WTC11 (cell line): ENCODE measurements at regions of chr2 and their contacts with region 1.

Region 1: GRCh38 chr2:219029829-219030165 is 11.5 kb downstream of the CFAP65 start:
- DNase-seq: peak; percentile 89
- ATAC-seq: peak; percentile 96
- H3K4me3 Mint-ChIP-seq: no peak overlapping the region
- H3K27ac Mint-ChIP-seq: 0 out of 2 replicates have a peak overlapping the region, but pooled peaks have one; percentile 26
- H3K4me1 Mint-ChIP-seq: peaks cover 3% of the 10 kb centered on the region
- H3K27me3 Mint-ChIP-seq: no peaks in the 10 kb centered on the region; the same call in 1 of the 2 replicates
- CTCF ChIP-seq: peak; percentile 94

Region 2: GRCh38 chr2:218618102-218618860 is 411.5 kb before region 1 on chr2:
- CTCF ChIA-PET with region 1: no interaction called
- POLR2A ChIA-PET with region 1: no interaction called
- DNase-seq: peak; percentile 22
- ATAC-seq: peak; percentile 60
- H3K4me3 Mint-ChIP-seq: no peak overlapping the region
- H3K27ac Mint-ChIP-seq: no peak overlapping the region
- H3K4me1 Mint-ChIP-seq: peaks cover 3% of the 10 kb centered on the region
- H3K27me3 Mint-ChIP-seq: no peaks in the 10 kb centered on the region
- CTCF ChIP-seq: no peak

Region 3: GRCh38 chr2:218833023-218833609 is 196.7 kb before region 1 on chr2:
- CTCF ChIA-PET with region 1: no interaction called
- POLR2A ChIA-PET with region 1: no interaction called
- DNase-seq: no peak
- ATAC-seq: no peak
- H3K4me3 Mint-ChIP-seq: no peak overlapping the region
- H3K27ac Mint-ChIP-seq: no peak overlapping the region
- H3K4me1 Mint-ChIP-seq: no peaks in the 10 kb centered on the region
- H3K27me3 Mint-ChIP-seq: peaks cover 9% of the 10 kb centered on the region
- CTCF ChIP-seq: no peak

Region 4: DNA sequence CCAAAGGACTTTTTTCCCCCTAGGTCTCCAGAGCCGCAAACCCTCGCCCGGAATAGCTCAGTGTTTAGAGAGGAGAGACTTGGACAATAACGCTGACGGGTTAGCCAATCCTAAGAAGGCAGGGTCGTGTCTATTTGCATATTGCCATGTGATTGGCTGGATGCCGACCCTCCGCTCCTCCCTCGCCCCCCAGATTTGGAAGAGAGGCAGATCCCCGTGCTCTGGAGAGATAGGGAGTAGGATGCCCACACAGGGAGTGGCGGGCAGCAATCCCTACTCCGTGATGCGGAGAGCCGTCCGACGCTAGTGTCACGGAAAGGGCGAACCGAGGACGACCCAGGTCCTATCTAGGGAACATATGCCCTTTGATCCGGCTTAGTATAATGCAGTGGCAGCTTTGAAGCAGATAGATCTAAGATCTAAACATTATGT is 168.8 kb before region 1 on chr2:
- CTCF ChIA-PET with region 1: interaction called, 13 read pairs
- POLR2A ChIA-PET with region 1: no interaction called
- DNase-seq: peak; percentile 87
- ATAC-seq: peak; percentile 94
- H3K4me3 Mint-ChIP-seq: peak overlapping the region; percentile 69
- H3K27ac Mint-ChIP-seq: no peak overlapping the region
- H3K4me1 Mint-ChIP-seq: peaks cover 38% of the 10 kb centered on the region
- H3K27me3 Mint-ChIP-seq: peaks cover 93% of the 10 kb centered on the region
- CTCF ChIP-seq: no peak

Region 5: DNA sequence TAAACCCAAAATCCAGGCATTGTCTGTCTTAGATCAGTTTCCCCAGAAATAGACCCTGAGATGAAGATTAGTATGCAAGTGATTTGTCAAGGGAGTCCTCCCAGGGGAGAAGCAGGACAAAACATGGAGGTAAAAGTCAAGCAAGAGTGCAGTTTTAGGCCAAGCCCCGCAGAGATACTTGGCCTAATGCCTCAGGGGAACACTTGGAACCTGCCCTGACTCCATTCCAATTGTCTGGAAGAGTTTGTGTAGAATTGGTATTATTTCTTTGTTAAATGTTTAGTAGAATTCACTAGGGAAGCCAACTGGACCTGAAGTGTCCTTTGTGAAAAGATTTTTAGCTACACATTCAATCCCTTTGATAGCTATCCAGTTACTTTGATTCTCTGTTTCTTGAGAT is 114.8 kb before region 1 on chr2:
- CTCF ChIA-PET with region 1: no interaction called
- POLR2A ChIA-PET with region 1: no interaction called
- DNase-seq: no peak
- ATAC-seq: no peak
- H3K4me3 Mint-ChIP-seq: no peak overlapping the region
- H3K27ac Mint-ChIP-seq: no peak overlapping the region
- H3K4me1 Mint-ChIP-seq: peaks cover 8% of the 10 kb centered on the region
- H3K27me3 Mint-ChIP-seq: peaks cover 31% of the 10 kb centered on the region
- CTCF ChIP-seq: no peak

Region 6: DNA sequence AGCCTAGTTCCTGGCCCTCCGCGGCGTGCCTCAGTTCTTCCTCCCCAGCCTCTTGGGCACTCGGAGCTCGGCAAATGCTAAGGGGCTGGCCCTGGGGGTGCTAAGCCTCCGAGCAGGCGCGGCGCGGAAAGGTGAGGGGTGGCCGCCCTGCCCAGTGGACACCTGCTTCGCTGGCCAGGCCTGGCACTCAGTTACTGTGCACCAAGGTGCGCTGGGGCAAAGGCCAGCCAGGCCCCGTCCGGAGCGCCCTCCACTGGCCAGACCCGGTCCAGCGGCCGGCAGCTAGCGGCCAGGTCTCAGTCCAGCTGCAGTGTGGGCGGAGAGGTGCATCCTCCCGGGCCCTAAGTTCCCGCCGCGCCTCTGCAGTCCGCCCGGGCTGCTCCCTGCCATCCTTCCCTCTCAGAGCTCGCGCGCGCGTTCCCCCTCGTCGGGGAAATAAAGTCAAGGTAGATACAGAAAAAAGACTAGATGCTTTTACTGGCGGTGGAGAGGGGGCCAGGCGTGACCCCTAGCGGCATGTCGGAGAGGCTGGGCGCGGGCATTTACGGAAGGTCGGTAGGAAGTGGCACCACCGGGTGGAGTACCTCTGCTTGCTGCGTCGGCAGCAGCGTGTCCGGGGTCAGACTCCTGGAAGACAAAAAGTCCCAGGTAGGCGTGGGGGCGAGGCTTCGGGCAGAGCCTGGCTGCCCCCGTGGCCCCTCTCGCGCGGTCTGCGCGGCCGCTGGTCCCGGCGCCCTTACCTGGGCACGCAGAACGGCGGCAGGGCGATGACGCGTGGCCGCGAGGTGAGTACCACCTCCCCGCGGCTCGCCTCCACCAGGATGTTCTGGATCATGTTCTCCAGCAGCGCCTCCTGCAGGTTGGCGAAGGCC is 27.2 kb before region 1 on chr2:
- CTCF ChIA-PET with region 1: interaction called, 70 read pairs
- POLR2A ChIA-PET with region 1: no interaction called
- DNase-seq: peak; percentile 95
- ATAC-seq: peak; percentile 69
- H3K4me3 Mint-ChIP-seq: peak overlapping the region; percentile 83
- H3K27ac Mint-ChIP-seq: no peak overlapping the region
- H3K4me1 Mint-ChIP-seq: peaks cover 22% of the 10 kb centered on the region
- H3K27me3 Mint-ChIP-seq: peaks cover 100% of the 10 kb centered on the region
- CTCF ChIP-seq: peak; percentile 29; the same call in 1 of the 2 replicates

Region 7: GRCh38 chr2:219057709-219058540 is 28.1 kb after region 1 on chr2:
- CTCF ChIA-PET with region 1: interaction called, 71 read pairs
- POLR2A ChIA-PET with region 1: no interaction called
- DNase-seq: peak; percentile 91
- ATAC-seq: peak; percentile 82
- H3K4me3 Mint-ChIP-seq: peak overlapping the region; percentile 58
- H3K27ac Mint-ChIP-seq: no peak overlapping the region
- H3K4me1 Mint-ChIP-seq: peaks cover 25% of the 10 kb centered on the region
- H3K27me3 Mint-ChIP-seq: peaks cover 96% of the 10 kb centered on the region
- CTCF ChIP-seq: peak; percentile 80

Region 8: GRCh38 chr2:219104107-219105035 is 74.6 kb after region 1 on chr2:
- CTCF ChIA-PET with region 1: interaction called, 34 read pairs
- POLR2A ChIA-PET with region 1: no interaction called
- DNase-seq: peak; percentile 41
- ATAC-seq: peak; percentile 98
- H3K4me3 Mint-ChIP-seq: no peak overlapping the region
- H3K27ac Mint-ChIP-seq: 0 out of 2 replicates have a peak overlapping the region, but pooled peaks have one; percentile 41
- H3K4me1 Mint-ChIP-seq: peaks cover 3% of the 10 kb centered on the region
- H3K27me3 Mint-ChIP-seq: no peaks in the 10 kb centered on the region
- CTCF ChIP-seq: peak; percentile 75

Region 9: DNA sequence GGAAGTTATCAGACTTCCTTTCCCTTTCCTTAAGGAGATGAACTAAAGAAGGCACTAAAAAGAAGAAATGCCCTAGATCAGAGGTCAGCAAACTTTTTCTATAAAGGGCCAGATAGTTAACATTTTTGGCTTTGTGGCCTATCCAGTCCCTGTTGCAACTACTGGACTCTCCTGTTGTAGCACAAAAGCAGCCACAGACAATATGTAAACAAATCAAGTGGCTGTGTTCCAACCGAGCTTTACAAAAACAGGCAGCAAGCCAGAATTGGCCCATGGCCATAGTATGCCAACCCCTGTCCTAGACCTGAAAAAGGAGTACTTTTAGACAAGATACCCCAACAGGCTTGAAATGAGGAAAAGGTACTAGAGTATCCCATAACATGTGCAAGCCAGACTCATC is 119.9 kb after region 1 on chr2:
- CTCF ChIA-PET with region 1: interaction called, 91 read pairs
- POLR2A ChIA-PET with region 1: no interaction called
- DNase-seq: no peak
- ATAC-seq: no peak
- H3K4me3 Mint-ChIP-seq: no peak overlapping the region
- H3K27ac Mint-ChIP-seq: no peak overlapping the region
- H3K4me1 Mint-ChIP-seq: no peaks in the 10 kb centered on the region
- H3K27me3 Mint-ChIP-seq: no peaks in the 10 kb centered on the region
- CTCF ChIP-seq: no peak

Region 10: DNA sequence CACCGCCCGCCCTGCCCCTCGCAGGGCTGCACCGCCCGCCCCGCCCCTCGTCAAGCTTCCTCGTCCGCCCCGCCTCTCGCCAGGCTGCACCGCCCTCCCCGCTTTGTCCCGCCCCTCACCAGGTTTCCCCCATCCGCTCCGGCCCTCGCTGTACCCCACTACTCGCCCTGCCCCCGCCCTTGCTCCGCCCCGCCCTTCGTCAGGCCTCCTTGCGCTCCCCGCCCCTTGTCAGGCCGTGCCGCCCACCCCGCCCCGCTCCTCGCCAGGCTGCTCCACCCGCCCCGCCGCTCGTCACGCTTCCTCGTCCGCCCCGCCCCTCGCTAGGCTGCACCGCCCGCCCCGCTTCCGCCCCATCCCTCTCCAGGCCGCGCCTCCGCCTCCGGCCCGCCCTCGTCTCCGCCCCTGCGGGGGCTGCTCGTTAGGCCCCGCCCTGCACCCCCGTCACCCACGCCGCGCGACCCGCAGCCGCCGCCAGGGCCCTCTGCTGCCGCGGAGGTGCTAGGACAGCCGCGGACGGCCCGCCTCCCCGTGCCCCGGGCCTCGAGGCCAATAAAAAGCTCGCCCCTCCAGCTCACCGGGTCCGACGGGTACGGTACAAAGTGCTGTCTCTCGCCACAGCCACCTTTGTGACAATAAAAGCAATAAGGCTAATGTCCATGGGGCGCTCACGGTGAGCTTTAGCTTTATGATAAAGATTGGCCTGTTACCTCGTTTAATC is 358.5 kb after region 1 on chr2:
- CTCF ChIA-PET with region 1: interaction called, 13 read pairs
- POLR2A ChIA-PET with region 1: no interaction called
- DNase-seq: peak; percentile 97
- ATAC-seq: peak; percentile 76
- H3K4me3 Mint-ChIP-seq: peak overlapping the region; percentile 76
- H3K27ac Mint-ChIP-seq: no peak overlapping the region; the same call in 1 of the 2 replicates
- H3K4me1 Mint-ChIP-seq: peaks cover 7% of the 10 kb centered on the region
- H3K27me3 Mint-ChIP-seq: 0 out of 2 replicates have a peak, but pooled peaks cover 3% of the 10 kb centered on the region
- CTCF ChIP-seq: no peak